ENCODE measurements at regions of chr6 and their contacts with region 1.

Region 1: GRCh38 chr6:25278914-25279747 is at the start of gene CARMIL1:
- DNase-seq: peak; percentile 54 to 86 (median 70)
- ATAC-seq: peak; percentile 73 to 74
- H3K4me3 Mint-ChIP-seq: peak within 1 kb of the TSS; percentile 89 to 98 (median 92)
- H3K27ac Mint-ChIP-seq: peak within 1 kb of the TSS; percentile 73 to 96 (median 90)
- H3K4me1 Mint-ChIP-seq: peaks cover 17 to 43% (median 31%) of the 10 kb centered on the region in 4 donors
- H3K27me3 Mint-ChIP-seq: peaks cover 0 to 3% (median 0%) of the 10 kb centered on the region in 5 donors
- polyA plus RNA-seq, gene CARMIL1: 1.3 to 1.9 (median 1.7) TPM

Region 2: DNA sequence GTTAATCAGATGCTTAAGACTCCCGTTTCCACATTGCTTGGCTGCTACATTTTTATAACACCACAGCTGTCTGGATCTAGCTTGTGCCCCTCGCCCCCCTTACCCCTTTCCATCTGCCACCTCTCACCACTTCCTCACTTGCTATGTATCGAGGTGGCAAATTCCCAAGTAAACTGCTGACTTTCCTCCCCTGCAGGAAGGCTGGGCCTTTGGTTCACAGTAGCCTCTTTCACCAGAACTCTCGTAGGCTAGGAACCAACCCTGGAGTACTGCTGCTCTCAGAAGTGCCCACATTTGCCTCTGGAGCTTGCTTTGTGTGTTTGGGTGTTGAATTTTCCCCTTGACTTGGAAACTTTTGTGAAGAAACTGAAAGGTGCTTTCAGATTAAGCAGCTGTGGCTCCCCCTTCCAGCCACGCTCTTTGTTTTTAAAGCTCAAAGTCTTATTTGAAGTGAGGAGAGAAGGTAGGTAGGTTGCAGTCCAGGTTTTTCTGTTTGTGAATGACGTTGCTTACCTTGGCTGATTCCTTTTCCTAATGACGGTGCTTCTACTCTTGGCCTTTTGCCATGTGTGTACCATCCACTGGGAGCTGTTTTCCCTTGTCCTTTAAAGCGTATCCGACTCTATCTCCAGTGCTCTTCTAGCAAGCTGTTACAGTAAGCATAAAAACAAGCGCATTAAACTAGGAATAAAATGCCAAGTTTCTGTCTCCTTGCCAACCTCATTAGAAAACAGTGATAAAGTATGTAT is 90.5 kb after region 1 on chr6:
- POLR2A ChIA-PET with region 1: interaction called, 28 read pairs
- DNase-seq: peak in 8 of 10 donors; percentile 6 to 54 (median 19)
- ATAC-seq: peak; percentile 26 to 47
- H3K4me3 Mint-ChIP-seq: peak overlapping the region; percentile 65 to 97 (median 88)
- H3K27ac Mint-ChIP-seq: peak overlapping the region; percentile 90 to 99 (median 98)
- H3K4me1 Mint-ChIP-seq: peaks cover 43 to 85% (median 75%) of the 10 kb centered on the region in 4 donors
- H3K27me3 Mint-ChIP-seq: no peaks in the 10 kb centered on the region

Region 3: GRCh38 chr6:25404693-25405169 is 125.6 kb after region 1 on chr6:
- POLR2A ChIA-PET with region 1: interaction called, 19 read pairs
- DNase-seq: peak in 9 of 10 donors; percentile 0 to 68 (median 23)
- ATAC-seq: peak; percentile 89 to 90
- H3K4me3 Mint-ChIP-seq: no peak overlapping the region
- H3K27ac Mint-ChIP-seq: no peak overlapping the region
- H3K4me1 Mint-ChIP-seq: peaks cover 0 to 28% (median 6%) of the 10 kb centered on the region in 4 donors
- H3K27me3 Mint-ChIP-seq: no peaks in the 10 kb centered on the region

Region 4: GRCh38 chr6:25441663-25442270 is 162.6 kb after region 1 on chr6:
- POLR2A ChIA-PET with region 1: interaction called, 10 read pairs
- DNase-seq: peak in 7 of 10 donors; percentile 10 to 72 (median 48)
- ATAC-seq: peak; percentile 92 to 93
- H3K4me3 Mint-ChIP-seq: peak overlapping the region in 9 of 10 donors; percentile 5 to 78 (median 66)
- H3K27ac Mint-ChIP-seq: peak overlapping the region in 7 of 10 donors; percentile 92 to 98 (median 95)
- H3K4me1 Mint-ChIP-seq: peaks cover 6 to 36% (median 23%) of the 10 kb centered on the region in 4 donors
- H3K27me3 Mint-ChIP-seq: no peaks in the 10 kb centered on the region

Region 5: DNA sequence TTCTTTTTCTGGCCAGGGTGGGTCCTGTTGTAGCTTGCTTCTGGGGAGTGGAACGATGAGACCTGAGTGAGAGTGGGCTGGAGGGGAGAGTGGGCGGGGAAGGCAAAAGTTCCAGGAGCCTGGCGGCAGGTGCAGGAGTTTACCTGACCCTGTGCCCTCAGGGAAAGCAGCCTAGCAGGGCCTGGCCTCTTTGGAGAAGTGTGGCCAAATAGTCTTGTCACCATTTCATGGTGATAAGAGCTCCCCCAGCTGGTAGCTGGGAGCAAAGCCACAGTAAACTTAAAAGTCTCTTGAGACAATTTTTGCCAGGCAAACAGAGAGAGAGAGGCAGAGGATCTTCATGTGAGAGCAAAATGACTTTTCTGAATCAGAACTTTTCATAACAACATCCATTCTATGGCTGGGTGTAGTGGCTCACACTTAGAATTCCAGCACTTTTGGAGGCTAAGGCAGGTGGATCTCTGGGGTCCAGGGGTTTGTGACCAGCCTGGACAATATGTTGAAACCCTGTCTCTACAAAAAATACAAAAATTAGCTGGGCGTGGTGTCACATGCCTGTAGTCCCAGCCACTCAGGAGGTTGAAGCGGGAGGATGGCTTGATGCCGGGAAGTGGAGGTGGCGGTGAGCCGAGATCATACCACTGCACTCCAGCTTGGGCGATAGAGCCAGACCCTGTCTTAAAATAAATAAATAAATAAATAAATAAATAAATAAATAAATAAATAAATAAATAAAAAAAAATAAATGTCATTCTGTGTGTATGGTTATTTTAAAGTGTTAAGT is 211.1 kb after region 1 on chr6:
- POLR2A ChIA-PET with region 1: interaction called, 31 read pairs
- DNase-seq: peak; percentile 37 to 84 (median 65)
- ATAC-seq: peak; percentile 78 to 96
- H3K4me3 Mint-ChIP-seq: no peak overlapping the region
- H3K27ac Mint-ChIP-seq: peak overlapping the region in 6 of 10 donors; percentile 22 to 89 (median 58)
- H3K4me1 Mint-ChIP-seq: peaks cover 6 to 9% (median 8%) of the 10 kb centered on the region in 4 donors
- H3K27me3 Mint-ChIP-seq: no peaks in the 10 kb centered on the region

Measured in naive thymus-derived CD8-positive, alpha-beta T cell (primary cell).